ENCODE measurements at regions of chr2 and their contacts with region 1.

Region 1: GRCh38 chr2:171178993-171179392 is 18.3 kb upstream of the TLK1 start:
- DNase-seq: peak in 1 of 2 experiments; percentile 44
- H3K4me3 ChIP-seq: no peak overlapping the region
- H3K27ac ChIP-seq: no peak overlapping the region
- H3K4me1 ChIP-seq: peaks cover 19% of the 10 kb centered on the region
- H3K27me3 ChIP-seq: no peaks in the 10 kb centered on the region
- CTCF ChIP-seq: no peak

Region 2: DNA sequence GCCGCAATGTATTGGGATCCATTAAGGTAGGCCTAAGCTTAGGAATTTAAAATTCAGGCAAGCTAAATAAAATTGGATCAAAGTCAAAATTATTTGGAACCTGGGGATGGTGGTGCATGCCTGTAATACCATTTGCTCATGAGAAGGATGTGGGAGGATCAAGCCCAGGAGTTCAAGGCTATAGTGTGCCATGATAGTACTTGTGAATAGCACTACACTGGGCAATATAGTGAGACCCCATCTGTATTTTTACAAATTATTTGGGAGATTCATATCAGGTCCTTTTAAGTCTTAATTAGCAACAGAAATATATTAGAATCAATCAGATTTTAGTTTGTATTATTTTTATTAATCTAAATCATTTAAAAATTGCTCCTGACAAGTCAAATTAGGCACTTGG is 21.5 kb after region 1 on chr2:
- CTCF ChIA-PET with region 1: no interaction called
- POLR2A ChIA-PET with region 1: no interaction called
- intact Hi-C with region 1: loop called (anchors 1 kb)
- DNase-seq: no peak
- H3K4me3 ChIP-seq: no peak overlapping the region
- H3K27ac ChIP-seq: no peak overlapping the region
- H3K4me1 ChIP-seq: no peaks in the 10 kb centered on the region
- H3K27me3 ChIP-seq: no peaks in the 10 kb centered on the region
- CTCF ChIP-seq: no peak

Measured in PC-9 (cell line).